Panc1 (cell line): ENCODE measurements at regions of chr7 and their contacts with region 1.

Region 1: DNA sequence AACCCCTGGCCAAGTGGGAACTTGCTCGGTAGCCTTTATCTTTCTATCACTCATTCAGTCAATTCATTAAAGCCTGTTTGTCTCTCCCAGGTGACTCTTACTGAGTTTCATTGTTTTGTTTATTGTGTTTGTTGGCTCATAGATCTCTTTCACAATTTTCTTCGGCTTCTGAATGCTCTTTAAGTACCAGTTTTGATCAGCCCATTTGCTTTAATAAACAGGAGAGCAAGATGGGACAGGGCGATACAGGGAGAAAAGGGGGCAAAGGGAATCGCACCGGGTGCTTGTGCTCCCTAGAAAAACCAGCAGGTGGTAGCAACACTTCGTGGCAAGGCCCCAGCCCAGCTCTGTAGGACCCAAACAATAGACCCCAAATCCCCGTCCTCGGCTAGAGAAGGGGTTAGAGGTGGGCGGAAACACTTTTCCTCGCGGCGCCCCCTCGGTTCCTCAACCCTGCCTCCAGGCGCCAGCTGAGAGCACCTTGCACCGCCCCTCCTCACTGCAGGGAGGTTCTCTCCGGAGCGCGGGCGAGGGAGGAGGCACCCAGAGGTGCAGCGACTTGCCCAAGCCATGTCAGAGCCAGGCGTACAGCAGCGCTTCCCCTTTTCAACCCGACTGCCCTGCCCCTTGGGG is 1.0 kb upstream of the EPHB6 start:
- DNase-seq: peak; percentile 61
- ATAC-seq: peak; percentile 89
- H3K4me3 ChIP-seq: peak overlapping the region; percentile 56 to 79
- H3K27ac ChIP-seq: no peak overlapping the region
- H3K4me1 ChIP-seq: no peaks in the 10 kb centered on the region; the same call in 1 of the 2 replicates
- H3K27me3 ChIP-seq: peaks cover 27% of the 10 kb centered on the region
- CTCF ChIP-seq: peak; percentile 90

Region 2: DNA sequence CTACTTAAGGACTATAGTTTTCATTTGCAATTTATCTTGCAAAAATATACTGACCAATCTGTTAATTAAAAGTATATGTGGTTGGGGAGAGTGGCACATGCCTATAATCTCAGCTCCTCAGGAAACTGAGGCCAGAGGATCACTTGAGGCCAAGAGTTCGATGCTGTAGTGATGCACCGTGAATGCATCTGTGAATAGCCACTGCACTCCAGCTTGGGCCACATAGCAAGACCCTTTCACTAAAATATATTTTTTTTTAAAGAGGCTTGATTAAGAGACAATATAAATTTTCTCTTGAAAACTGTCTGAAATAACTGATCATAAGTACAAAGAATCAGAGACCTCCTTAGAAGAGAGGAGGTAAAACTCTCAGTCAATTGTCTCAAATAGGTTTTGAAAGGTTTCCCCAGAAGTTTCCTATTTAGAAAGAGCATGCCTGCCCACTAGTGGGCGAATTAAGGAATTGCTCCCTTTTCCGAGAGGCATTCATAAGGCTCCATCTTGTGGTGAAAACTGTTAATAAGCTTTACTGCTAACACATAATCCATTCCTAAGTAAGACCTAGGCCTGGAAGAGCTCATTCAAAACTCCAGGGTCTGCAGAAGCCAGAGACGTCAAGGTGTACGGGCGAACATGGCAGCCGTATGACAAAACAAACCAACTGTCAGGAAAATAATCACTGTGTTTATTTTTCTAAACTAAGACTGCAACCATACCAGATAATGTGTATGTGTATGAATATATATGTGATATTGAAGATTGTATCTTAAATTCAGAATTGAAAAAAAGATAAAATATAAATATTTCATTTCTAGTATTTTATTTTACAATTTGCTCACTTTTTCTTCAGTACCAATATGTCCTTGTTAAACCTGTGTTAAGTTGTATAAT is 361.2 kb after region 1 on chr7:
- CTCF ChIA-PET with region 1: interaction called, 3 read pairs
- POLR2A ChIA-PET with region 1: no interaction called
- in situ Hi-C with region 1: no loop called
- intact Hi-C with region 1: loop called (anchors 2 kb)
- DNase-seq: peak; percentile 89
- ATAC-seq: peak; percentile 88
- H3K4me3 ChIP-seq: no peak overlapping the region
- H3K27ac ChIP-seq: no peak overlapping the region
- H3K4me1 ChIP-seq: no peaks in the 10 kb centered on the region
- H3K27me3 ChIP-seq: peaks cover 3% of the 10 kb centered on the region; the same call in 1 of the 2 replicates
- CTCF ChIP-seq: peak; percentile 97